CD8-positive, alpha-beta memory T cell (primary cell): ENCODE measurements at regions of chr11 and their contacts with region 1.

Region 1: GRCh38 chr11:57567515-57568329 is at the start of gene UBE2L6:
- DNase-seq: peak; percentile 56 to 90 (median 79)
- H3K4me3 ChIP-seq: peak within 1 kb of the TSS; percentile 92
- H3K4me3 Mint-ChIP-seq: peak within 1 kb of the TSS; percentile 95 to 100 (median 100)
- H3K27ac ChIP-seq: peak within 1 kb of the TSS; percentile 86
- H3K27ac Mint-ChIP-seq: peak within 1 kb of the TSS; percentile 88 to 100 (median 98)
- H3K4me1 ChIP-seq: peaks cover 25% of the 10 kb centered on the region
- H3K4me1 Mint-ChIP-seq: peaks cover 41 to 51% (median 46%) of the 10 kb centered on the region in 3 donors
- H3K27me3 ChIP-seq: no peaks in the 10 kb centered on the region
- H3K27me3 Mint-ChIP-seq: no peaks in the 10 kb centered on the region
- total RNA-seq, gene UBE2L6: 74.9 to 79.2 TPM

Region 2: GRCh38 chr11:57515332-57516060 is 52.2 kb before region 1 on chr11 and contains the start of gene SLC43A1:
- CTCF ChIA-PET with region 1: interaction called, 10 read pairs
- POLR2A ChIA-PET with region 1: no interaction called
- DNase-seq: peak in 1 of 5 donors; percentile 21
- H3K4me3 ChIP-seq: peak within 1 kb of the TSS; percentile 86
- H3K4me3 Mint-ChIP-seq: peak within 1 kb of the TSS; percentile 97 to 99 (median 98)
- H3K27ac ChIP-seq: peak within 1 kb of the TSS; percentile 61
- H3K27ac Mint-ChIP-seq: peak within 1 kb of the TSS; percentile 79 to 95 (median 90)
- H3K4me1 ChIP-seq: peaks cover 18% of the 10 kb centered on the region
- H3K4me1 Mint-ChIP-seq: peaks cover 24 to 36% (median 32%) of the 10 kb centered on the region in 3 donors
- H3K27me3 ChIP-seq: no peaks in the 10 kb centered on the region
- H3K27me3 Mint-ChIP-seq: peaks cover 0 to 3% of the 10 kb centered on the region in 2 donors
- total RNA-seq, gene SLC43A1: 24.2 to 25.3 TPM

Region 3: GRCh38 chr11:57549983-57550382 is 17.7 kb before region 1 on chr11:
- CTCF ChIA-PET with region 1: interaction called, 10 read pairs
- POLR2A ChIA-PET with region 1: no interaction called
- DNase-seq: no peak
- H3K4me3 ChIP-seq: no peak overlapping the region
- H3K4me3 Mint-ChIP-seq: no peak overlapping the region
- H3K27ac ChIP-seq: no peak overlapping the region
- H3K27ac Mint-ChIP-seq: peak overlapping the region in 6 of 8 donors; percentile 14 to 76 (median 45)
- H3K4me1 ChIP-seq: no peaks in the 10 kb centered on the region
- H3K4me1 Mint-ChIP-seq: peaks cover 9 to 18% (median 10%) of the 10 kb centered on the region in 3 donors
- H3K27me3 ChIP-seq: no peaks in the 10 kb centered on the region
- H3K27me3 Mint-ChIP-seq: no peaks in the 10 kb centered on the region

Region 4: GRCh38 chr11:57649826-57650738 is 82.4 kb after region 1 on chr11 and contains the start of gene YPEL4:
- CTCF ChIA-PET with region 1: interaction called, 144 read pairs
- POLR2A ChIA-PET with region 1: interaction called, 4 read pairs
- DNase-seq: peak; percentile 66 to 89 (median 74)
- H3K4me3 ChIP-seq: peak within 1 kb of the TSS; percentile 66
- H3K4me3 Mint-ChIP-seq: peak within 1 kb of the TSS; percentile 77 to 93 (median 87)
- H3K27ac ChIP-seq: no peak within 1 kb of the TSS
- H3K27ac Mint-ChIP-seq: peak within 1 kb of the TSS; percentile 84 to 98 (median 94)
- H3K4me1 ChIP-seq: peaks cover 19% of the 10 kb centered on the region
- H3K4me1 Mint-ChIP-seq: peaks cover 29 to 62% (median 33%) of the 10 kb centered on the region in 3 donors
- H3K27me3 ChIP-seq: peaks cover 32% of the 10 kb centered on the region
- H3K27me3 Mint-ChIP-seq: peaks cover 33 to 40% of the 10 kb centered on the region in 2 donors
- total RNA-seq, gene YPEL4: 1.0 to 1.7 TPM

Region 5: GRCh38 chr11:57800444-57801182 is 232.9 kb after region 1 on chr11:
- CTCF ChIA-PET with region 1: interaction called, 41 read pairs
- POLR2A ChIA-PET with region 1: no interaction called
- DNase-seq: peak in 2 of 5 donors; percentile 57 to 65
- H3K4me3 ChIP-seq: no peak overlapping the region
- H3K4me3 Mint-ChIP-seq: peak overlapping the region in 2 of 7 donors; percentile 15 to 41
- H3K27ac ChIP-seq: no peak overlapping the region
- H3K27ac Mint-ChIP-seq: peak overlapping the region; percentile 30 to 92 (median 86)
- H3K4me1 ChIP-seq: peaks cover 22% of the 10 kb centered on the region
- H3K4me1 Mint-ChIP-seq: peaks cover 11 to 21% (median 13%) of the 10 kb centered on the region in 3 donors
- H3K27me3 ChIP-seq: no peaks in the 10 kb centered on the region
- H3K27me3 Mint-ChIP-seq: peaks cover 0 to 2% of the 10 kb centered on the region in 2 donors